HepG2 (cell line): ENCODE measurements at regions of chr17 and their contacts with region 1.

Region 1: DNA sequence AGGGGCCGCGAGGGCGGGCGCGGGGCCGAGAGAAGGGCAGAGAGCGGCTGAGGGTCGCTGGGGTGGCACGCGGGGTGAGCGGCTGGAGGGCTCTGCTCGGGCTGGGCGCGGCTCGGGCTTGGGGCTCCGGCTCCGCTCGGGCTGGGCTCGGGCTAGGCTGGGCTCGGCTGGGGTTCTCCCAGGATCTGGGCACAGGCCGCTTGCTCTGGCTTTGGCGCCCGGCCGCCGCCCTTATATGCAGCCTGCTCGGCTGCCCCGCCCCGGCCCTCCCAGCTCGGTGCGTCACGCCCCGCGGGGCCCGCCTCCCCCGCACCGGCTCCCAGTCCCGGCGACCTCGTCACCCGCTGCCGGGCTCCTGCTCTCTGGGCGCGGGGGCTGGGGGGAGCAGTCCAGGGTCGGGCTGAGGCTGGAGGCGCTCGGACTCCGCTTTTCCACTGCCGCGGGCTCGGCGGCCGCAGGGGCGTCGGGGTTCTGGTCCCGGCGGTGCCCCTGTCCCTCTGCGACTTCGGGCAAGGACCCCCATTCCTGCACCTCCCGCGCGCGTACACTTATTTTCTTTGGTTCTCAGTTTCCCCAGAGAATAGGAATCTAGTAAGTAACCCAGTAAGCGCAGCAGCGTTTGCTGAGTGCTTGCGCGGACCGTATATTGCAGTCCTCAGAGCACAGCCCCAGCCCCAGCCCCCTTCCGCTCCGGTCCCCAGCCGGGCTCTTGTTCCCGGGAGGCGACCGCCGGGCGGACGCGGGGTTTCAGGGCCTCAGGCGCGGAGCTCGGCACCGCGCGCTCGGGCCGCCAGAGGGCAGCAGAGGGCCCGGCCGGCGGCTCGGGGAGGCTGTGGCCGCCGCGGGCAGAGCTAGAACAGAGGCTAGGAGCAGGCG is at the start of gene RASD1:
- DNase-seq: peak; percentile 59
- ATAC-seq: peak; percentile 86
- H3K4me3 ChIP-seq: peak within 1 kb of the TSS; percentile 53 to 71 (median 65); a peak in 5 of 6 replicates
- H3K27ac ChIP-seq: peak within 1 kb of the TSS; percentile 34
- H3K4me1 ChIP-seq: peaks cover 26% of the 10 kb centered on the region
- H3K27me3 ChIP-seq: peaks cover 4 to 39% of the 10 kb centered on the region in 2 experiments; a peak in 4 of 5 replicates
- CTCF ChIP-seq: peak; percentile 81
- EP300 ChIP-seq: 0 out of 4 replicates have a peak, but pooled peaks of 1 of the 2 experiments have one; percentile 13
- POLR2A ChIP-seq: peak; percentile 89 to 97
- RAD21 ChIP-seq: peak; percentile 96
- total RNA-seq, gene RASD1: 1.4 and 1.6 TPM in 2 replicates

Region 2: GRCh38 chr17:17363638-17364337 is 132.6 kb before region 1 on chr17:
- CTCF ChIA-PET with region 1: no interaction called
- POLR2A ChIA-PET with region 1: interaction called, 19 read pairs
- in situ Hi-C with region 1: loop called (anchors 5 kb)
- intact Hi-C with region 1: no loop called
- DNase-seq: no peak
- ATAC-seq: peak; percentile 72
- H3K4me3 ChIP-seq: peak overlapping the region; percentile 13 to 43 (median 33); a peak in 5 of 6 replicates
- H3K27ac ChIP-seq: no peak overlapping the region
- H3K4me1 ChIP-seq: peaks cover 33% of the 10 kb centered on the region
- H3K27me3 ChIP-seq: no peaks in the 10 kb centered on the region; a peak in 1 of 5 replicates
- CTCF ChIP-seq: no peak
- EP300 ChIP-seq: no peak; a peak in 1 of 4 replicates
- POLR2A ChIP-seq: no peak
- RAD21 ChIP-seq: no peak

Region 3: GRCh38 chr17:17416007-17416399 is 80.4 kb before region 1 on chr17:
- CTCF ChIA-PET with region 1: no interaction called
- POLR2A ChIA-PET with region 1: interaction called, 16 read pairs
- in situ Hi-C with region 1: no loop called
- intact Hi-C with region 1: no loop called
- DNase-seq: peak; percentile 91
- ATAC-seq: peak; percentile 73
- H3K4me3 ChIP-seq: no peak overlapping the region
- H3K27ac ChIP-seq: peak overlapping the region; percentile 82
- H3K4me1 ChIP-seq: peaks cover 50% of the 10 kb centered on the region
- H3K27me3 ChIP-seq: no peaks in the 10 kb centered on the region
- CTCF ChIP-seq: no peak
- EP300 ChIP-seq: no peak
- POLR2A ChIP-seq: no peak
- RAD21 ChIP-seq: no peak

Region 4: GRCh38 chr17:17462048-17462824 is 34.2 kb before region 1 on chr17:
- CTCF ChIA-PET with region 1: no interaction called
- POLR2A ChIA-PET with region 1: interaction called, 19 read pairs
- in situ Hi-C with region 1: no loop called
- intact Hi-C with region 1: no loop called
- DNase-seq: peak; percentile 61
- ATAC-seq: peak; percentile 95
- H3K4me3 ChIP-seq: peak overlapping the region; percentile 25 to 59 (median 41); a peak in 4 of 6 replicates
- H3K27ac ChIP-seq: peak overlapping the region; percentile 45
- H3K4me1 ChIP-seq: peaks cover 47% of the 10 kb centered on the region
- H3K27me3 ChIP-seq: peaks cover 2 to 13% of the 10 kb centered on the region in 2 experiments; a peak in 4 of 5 replicates
- CTCF ChIP-seq: peak; percentile 51
- EP300 ChIP-seq: peak in 1 of 2 experiments; percentile 76; a peak in 2 of 4 replicates
- POLR2A ChIP-seq: peak in 1 of 2 experiments; percentile 52; a peak in 2 of 4 replicates
- RAD21 ChIP-seq: no peak

Region 5: DNA sequence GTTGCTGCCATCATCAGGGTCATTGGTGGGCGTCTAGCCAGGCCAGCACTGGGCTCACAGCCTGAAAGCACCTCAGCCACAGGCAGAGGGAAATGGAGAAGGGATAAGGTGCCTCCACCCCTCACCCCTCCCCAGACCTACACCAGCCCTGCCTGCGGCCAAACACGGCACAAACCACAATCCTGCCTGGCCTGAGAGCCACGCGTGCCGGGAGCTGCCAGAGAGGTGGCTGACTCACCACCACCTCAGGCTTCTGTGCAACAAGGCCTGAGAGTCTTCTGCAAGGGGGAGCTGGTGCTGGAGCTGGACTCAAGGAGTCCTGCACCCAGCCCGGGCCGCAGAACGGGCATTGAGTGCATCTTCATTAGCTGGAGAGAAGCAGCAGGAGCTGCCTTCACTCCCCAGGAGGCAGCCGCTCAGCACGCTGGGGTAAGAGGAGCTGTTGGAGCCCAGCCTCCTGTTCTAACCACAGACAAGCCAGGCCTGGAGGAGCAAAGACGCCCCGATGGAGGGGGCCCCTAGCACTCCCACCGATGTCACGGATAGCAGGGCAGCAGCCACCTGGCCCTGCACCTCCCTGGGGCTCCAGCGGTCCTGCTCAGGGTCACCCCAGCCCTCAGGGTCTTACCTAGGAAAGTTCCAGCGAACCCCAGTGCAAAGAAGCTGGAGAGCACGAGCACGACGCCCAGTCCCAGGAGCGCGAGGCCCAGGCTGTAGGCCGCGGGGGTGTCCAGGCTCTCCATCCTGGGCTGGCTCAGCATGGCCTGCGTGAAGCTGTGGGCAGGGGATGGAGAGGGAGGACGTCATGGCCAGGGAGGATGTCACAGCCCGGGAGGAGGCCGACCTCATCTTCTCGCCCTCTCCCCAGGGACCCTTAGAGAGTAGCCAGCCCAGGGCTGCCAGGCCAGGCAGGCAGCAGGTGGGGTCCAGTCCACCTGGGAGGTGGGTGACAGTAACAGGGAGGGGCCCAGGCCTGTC is 15.7 kb after region 1 on chr17:
- CTCF ChIA-PET with region 1: no interaction called
- POLR2A ChIA-PET with region 1: no interaction called
- in situ Hi-C with region 1: no loop called
- intact Hi-C with region 1: no loop called
- DNase-seq: no peak
- ATAC-seq: no peak
- H3K4me3 ChIP-seq: no peak overlapping the region
- H3K27ac ChIP-seq: no peak overlapping the region
- H3K4me1 ChIP-seq: no peaks in the 10 kb centered on the region
- H3K27me3 ChIP-seq: no peaks in the 10 kb centered on the region
- CTCF ChIP-seq: no peak
- EP300 ChIP-seq: no peak
- POLR2A ChIP-seq: no peak
- RAD21 ChIP-seq: no peak

Region 6: GRCh38 chr17:17546399-17547185 is 50.2 kb after region 1 on chr17:
- CTCF ChIA-PET with region 1: no interaction called
- POLR2A ChIA-PET with region 1: interaction called, 10 read pairs
- in situ Hi-C with region 1: no loop called
- intact Hi-C with region 1: no loop called
- DNase-seq: no peak
- ATAC-seq: no peak
- H3K4me3 ChIP-seq: no peak overlapping the region; a peak in 1 of 6 replicates
- H3K27ac ChIP-seq: peak overlapping the region; percentile 17
- H3K4me1 ChIP-seq: peaks cover 40% of the 10 kb centered on the region
- H3K27me3 ChIP-seq: no peaks in the 10 kb centered on the region
- CTCF ChIP-seq: no peak
- EP300 ChIP-seq: no peak
- POLR2A ChIP-seq: no peak
- RAD21 ChIP-seq: no peak

Region 7: GRCh38 chr17:17591355-17592298 is 95.2 kb after region 1 on chr17 and contains the start of gene PEMT:
- CTCF ChIA-PET with region 1: no interaction called
- POLR2A ChIA-PET with region 1: interaction called, 24 read pairs
- in situ Hi-C with region 1: no loop called
- intact Hi-C with region 1: no loop called
- DNase-seq: peak; percentile 97
- ATAC-seq: peak; percentile 96
- H3K4me3 ChIP-seq: peak within 1 kb of the TSS; percentile 76 to 94 (median 94)
- H3K27ac ChIP-seq: peak within 1 kb of the TSS; percentile 89
- H3K4me1 ChIP-seq: peaks cover 26% of the 10 kb centered on the region
- H3K27me3 ChIP-seq: no peaks in the 10 kb centered on the region; a peak in 1 of 5 replicates
- CTCF ChIP-seq: no peak; the same call in 1 of the 2 replicates
- EP300 ChIP-seq: no peak
- POLR2A ChIP-seq: peak; percentile 68 to 84
- RAD21 ChIP-seq: peak; percentile 40
- total RNA-seq, gene PEMT: 16.4 and 31.7 TPM in 2 replicates